Esophagus muscularis mucosa (tissue), 4 donors: ENCODE measurements at regions of chr2 and their contacts with region 1.

Region 1: GRCh38 chr2:127415593-127416505 is 2.4 kb upstream of the PROC start:
- DNase-seq: no peak
- H3K4me3 ChIP-seq: peak overlapping the region; percentile 48 to 57 (median 50)
- H3K27ac ChIP-seq: no peak overlapping the region
- H3K4me1 ChIP-seq: peaks cover 26 to 30% (median 27%) of the 10 kb centered on the region in 4 donors
- H3K27me3 ChIP-seq: peaks cover 0 to 49% (median 6%) of the 10 kb centered on the region in 4 donors
- CTCF ChIP-seq: peak; percentile 57 to 66 (median 64)
- EP300 ChIP-seq: no peak
- POLR2A ChIP-seq: no peak

Region 2: GRCh38 chr2:127324635-127325034 is 91.2 kb before region 1 on chr2:
- intact Hi-C with region 1: loop called (anchors 5 kb)
- DNase-seq: no peak
- H3K4me3 ChIP-seq: no peak overlapping the region
- H3K27ac ChIP-seq: no peak overlapping the region
- H3K4me1 ChIP-seq: peaks cover 0 to 10% (median 8%) of the 10 kb centered on the region in 4 donors
- H3K27me3 ChIP-seq: no peaks in the 10 kb centered on the region
- CTCF ChIP-seq: peak; percentile 60 to 67 (median 64)
- EP300 ChIP-seq: no peak
- POLR2A ChIP-seq: no peak

Region 3: DNA sequence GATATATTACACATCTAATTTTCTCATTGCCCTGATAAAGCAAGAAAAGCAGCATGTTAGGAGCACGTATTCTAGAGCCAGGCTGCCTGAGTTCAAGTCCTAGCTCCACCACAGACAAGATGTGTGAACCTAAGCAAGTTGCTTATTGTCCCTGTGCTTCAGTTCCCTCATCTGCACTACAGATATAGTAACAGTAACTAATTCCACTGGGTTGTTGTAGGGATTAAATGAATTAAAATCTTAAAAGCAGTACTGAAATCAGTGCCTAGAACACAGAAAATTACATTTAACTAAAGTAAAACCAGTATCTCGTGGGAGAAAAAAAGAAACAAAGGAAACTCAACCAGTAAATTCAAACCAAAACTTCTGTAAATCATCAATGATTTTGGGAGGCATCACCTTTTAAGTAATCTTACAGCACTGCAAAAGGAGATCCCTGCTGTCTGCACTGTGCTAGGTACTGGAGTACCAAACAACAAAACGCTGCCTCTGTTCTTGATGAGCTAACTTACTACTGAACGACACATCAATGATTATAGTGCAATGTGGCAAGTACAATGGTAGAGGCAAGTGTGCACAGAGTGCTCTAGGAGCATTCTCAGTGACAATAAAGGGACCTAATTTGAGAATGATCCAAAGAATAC is 36.0 kb before region 1 on chr2:
- intact Hi-C with region 1: loop called (anchors 5 kb)
- DNase-seq: no peak
- H3K4me3 ChIP-seq: no peak overlapping the region
- H3K27ac ChIP-seq: no peak overlapping the region
- H3K4me1 ChIP-seq: peaks cover 25 to 62% (median 58%) of the 10 kb centered on the region in 4 donors
- H3K27me3 ChIP-seq: no peaks in the 10 kb centered on the region
- CTCF ChIP-seq: no peak
- EP300 ChIP-seq: no peak
- POLR2A ChIP-seq: no peak